Endothelial cell of umbilical vein (primary cell): ENCODE measurements at regions of chr15 and their contacts with region 1.

Region 1: GRCh38 chr15:45429974-45430792 is 51.8 kb upstream of the GATM start:
- DNase-seq: peak; percentile 50
- H3K4me3 ChIP-seq: peak overlapping the region in 2 of 3 experiments; percentile 32 to 55
- H3K27ac ChIP-seq: no peak overlapping the region
- H3K4me1 ChIP-seq: peaks cover 5% of the 10 kb centered on the region
- H3K27me3 ChIP-seq: peaks cover 2 to 14% of the 10 kb centered on the region in 2 experiments
- CTCF ChIP-seq: peak; percentile 100
- POLR2A ChIP-seq: no peak

Region 2: DNA sequence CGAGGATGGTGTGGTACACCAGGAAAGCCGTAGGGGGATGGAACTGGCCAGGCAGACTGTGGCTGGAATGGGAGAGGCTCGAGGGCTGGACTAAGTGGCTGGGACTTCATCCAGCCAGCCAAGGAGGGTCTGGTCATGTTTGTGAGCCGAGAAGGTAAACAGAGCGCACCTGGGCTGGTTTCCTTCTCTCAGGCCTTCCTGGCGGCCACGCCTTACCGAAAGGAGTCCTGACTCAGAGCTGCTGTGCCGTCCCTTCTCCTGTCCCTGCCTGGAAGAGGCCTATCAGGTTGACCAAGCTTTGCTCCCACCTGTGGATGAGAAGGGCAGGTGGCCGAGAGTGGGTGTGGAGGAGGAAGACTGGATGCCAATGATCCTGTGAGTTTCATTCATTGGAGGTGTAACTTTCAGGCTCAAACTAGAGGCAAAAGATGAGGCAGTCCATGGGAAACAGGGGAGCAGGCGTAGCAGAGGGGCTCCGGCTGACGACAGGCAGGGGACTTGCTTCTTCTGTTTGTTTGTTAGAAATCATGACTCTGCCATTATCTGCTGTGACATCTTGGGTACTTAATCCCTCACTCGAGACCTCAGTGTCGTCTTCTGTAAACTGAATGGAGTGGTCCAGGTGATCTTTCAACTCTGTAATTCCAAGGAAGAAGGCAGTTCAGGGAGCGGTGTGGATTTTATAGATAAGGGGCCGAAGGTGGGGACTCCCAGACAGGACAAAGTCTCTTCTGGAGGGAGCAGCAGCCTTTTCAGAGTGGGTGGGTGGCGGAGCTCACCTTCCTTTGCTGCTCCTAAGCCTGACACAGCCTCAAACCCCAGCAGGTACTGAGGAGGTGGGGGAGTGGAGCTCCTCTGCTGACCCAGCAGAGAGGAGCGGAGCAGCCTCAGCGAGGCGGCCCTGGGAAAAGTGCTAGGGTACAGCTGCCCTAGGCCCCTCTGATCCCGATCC is 20.0 kb after region 1 on chr15:
- CTCF ChIA-PET with region 1: interaction called, 15 read pairs
- POLR2A ChIA-PET with region 1: no interaction called
- dilution Hi-C with region 1: no loop called
- intact Hi-C with region 1: no loop called
- DNase-seq: no peak
- H3K4me3 ChIP-seq: no peak overlapping the region
- H3K27ac ChIP-seq: no peak overlapping the region
- H3K4me1 ChIP-seq: no peaks in the 10 kb centered on the region
- H3K27me3 ChIP-seq: peaks cover 3 to 7% of the 10 kb centered on the region in 2 experiments
- CTCF ChIP-seq: no peak
- POLR2A ChIP-seq: no peak